ENCODE measurements at regions of chr4 and their contacts with region 1.

Region 1: DNA sequence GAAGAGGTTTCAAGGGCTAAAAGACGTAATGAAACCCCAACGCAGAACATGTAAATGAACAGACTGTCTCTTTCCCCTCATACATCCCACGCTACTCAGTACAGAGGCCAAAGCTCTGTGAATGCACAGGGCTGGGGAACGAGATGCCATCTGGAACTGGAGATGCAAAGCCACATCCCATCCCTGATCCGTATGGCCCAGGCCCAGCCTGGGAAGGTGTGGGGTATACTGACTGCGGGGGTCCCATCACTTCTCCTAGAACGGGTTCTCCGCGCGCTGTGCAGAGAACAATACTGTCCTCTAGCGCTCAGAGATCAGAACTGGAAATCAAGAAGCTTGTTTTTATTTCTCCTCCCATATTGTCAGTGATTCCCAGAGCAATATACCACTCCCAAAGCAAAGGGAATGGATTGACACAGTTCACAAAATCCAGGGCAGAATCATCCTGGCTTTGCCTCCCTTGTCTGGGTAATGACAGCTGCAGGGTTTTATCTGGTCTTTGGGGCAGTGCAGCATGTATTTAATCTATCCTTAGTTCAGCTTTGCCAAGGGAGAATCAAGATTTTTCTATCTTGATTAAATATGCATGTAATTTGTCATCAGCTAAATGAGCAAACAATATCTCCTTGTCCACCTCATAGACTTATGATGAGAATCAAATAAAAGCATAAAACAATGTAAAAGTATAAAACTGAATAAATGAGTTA is 47.3 kb upstream of the TLR3 start:
- DNase-seq: no peak
- H3K4me3 ChIP-seq: no peak overlapping the region
- H3K27me3 ChIP-seq: no peaks in the 10 kb centered on the region; the same call in 1 of the 2 replicates
- CTCF ChIP-seq: peak; percentile 88

Region 2: GRCh38 chr4:185999207-185999606 is 22.4 kb before region 1 on chr4:
- CTCF ChIA-PET with region 1: interaction called, 15 read pairs
- POLR2A ChIA-PET with region 1: no interaction called
- DNase-seq: no peak
- H3K4me3 ChIP-seq: no peak overlapping the region
- H3K27me3 ChIP-seq: no peaks in the 10 kb centered on the region
- CTCF ChIP-seq: no peak

Region 3: GRCh38 chr4:186037692-186038658 is 16.4 kb after region 1 on chr4:
- CTCF ChIA-PET with region 1: interaction called, 24 read pairs
- POLR2A ChIA-PET with region 1: no interaction called
- DNase-seq: peak; percentile 48
- H3K4me3 ChIP-seq: no peak overlapping the region
- H3K27me3 ChIP-seq: peaks cover 5% of the 10 kb centered on the region; the same call in 1 of the 2 replicates
- CTCF ChIP-seq: peak; percentile 69

Region 4: GRCh38 chr4:186428481-186428880 is 406.9 kb after region 1 on chr4:
- CTCF ChIA-PET with region 1: no interaction called
- POLR2A ChIA-PET with region 1: no interaction called
- DNase-seq: no peak
- H3K4me3 ChIP-seq: no peak overlapping the region
- H3K27me3 ChIP-seq: no peaks in the 10 kb centered on the region
- CTCF ChIP-seq: no peak